ENCODE measurements at regions of chr12 and their contacts with region 1.

Region 1: GRCh38 chr12:6965026-6965661 is 5.3 kb downstream of the PHB2 start:
- DNase-seq: peak; percentile 89 to 92 (median 90)
- ATAC-seq: peak; percentile 68 to 79 (median 72)
- H3K4me3 ChIP-seq: no peak overlapping the region
- H3K27ac ChIP-seq: peak overlapping the region; percentile 18 to 81 (median 66)
- H3K4me1 ChIP-seq: peaks cover 6 to 56% (median 43%) of the 10 kb centered on the region in 12 donors
- H3K27me3 ChIP-seq: no peaks in the 10 kb centered on the region
- CTCF ChIP-seq: peak; percentile 87 to 96 (median 92)
- POLR2A ChIP-seq: no peak

Region 2: GRCh38 chr12:6867413-6868210 is 97.5 kb before region 1 on chr12 and contains the start of gene TPI1:
- intact Hi-C with region 1: loop called in 4 of 10 experiments (anchors 2 to 10 kb)
- DNase-seq: peak; percentile 89 to 93 (median 90)
- ATAC-seq: peak; percentile 66 to 87 (median 82)
- H3K4me3 ChIP-seq: peak within 1 kb of the TSS; percentile 77 to 100 (median 98)
- H3K27ac ChIP-seq: peak within 1 kb of the TSS; percentile 96 to 100 (median 99)
- H3K4me1 ChIP-seq: peaks cover 15 to 47% (median 43%) of the 10 kb centered on the region in 12 donors
- H3K27me3 ChIP-seq: no peaks in the 10 kb centered on the region
- CTCF ChIP-seq: peak in 2 of 12 donors; percentile 15 to 23
- POLR2A ChIP-seq: peak; percentile 80 to 99
- total RNA-seq, gene TPI1: 600 to 1,024 (median 730) TPM

Region 3: GRCh38 chr12:6927379-6928024 is 37.6 kb before region 1 on chr12 and contains the start of gene ATN1:
- intact Hi-C with region 1: loop called in 2 of 10 experiments (anchors 1 to 2 kb)
- DNase-seq: peak; percentile 89 to 91 (median 90)
- ATAC-seq: peak; percentile 23 to 65 (median 60)
- H3K4me3 ChIP-seq: peak within 1 kb of the TSS; percentile 67 to 98 (median 83)
- H3K27ac ChIP-seq: peak within 1 kb of the TSS; percentile 87 to 98 (median 96)
- H3K4me1 ChIP-seq: peaks cover 12 to 79% (median 58%) of the 10 kb centered on the region in 12 donors
- H3K27me3 ChIP-seq: no peaks in the 10 kb centered on the region
- CTCF ChIP-seq: no peak
- POLR2A ChIP-seq: peak in 1 of 2 donors; percentile 38
- total RNA-seq, gene ATN1: 38.4 to 82.9 (median 67.2) TPM

Region 4: DNA sequence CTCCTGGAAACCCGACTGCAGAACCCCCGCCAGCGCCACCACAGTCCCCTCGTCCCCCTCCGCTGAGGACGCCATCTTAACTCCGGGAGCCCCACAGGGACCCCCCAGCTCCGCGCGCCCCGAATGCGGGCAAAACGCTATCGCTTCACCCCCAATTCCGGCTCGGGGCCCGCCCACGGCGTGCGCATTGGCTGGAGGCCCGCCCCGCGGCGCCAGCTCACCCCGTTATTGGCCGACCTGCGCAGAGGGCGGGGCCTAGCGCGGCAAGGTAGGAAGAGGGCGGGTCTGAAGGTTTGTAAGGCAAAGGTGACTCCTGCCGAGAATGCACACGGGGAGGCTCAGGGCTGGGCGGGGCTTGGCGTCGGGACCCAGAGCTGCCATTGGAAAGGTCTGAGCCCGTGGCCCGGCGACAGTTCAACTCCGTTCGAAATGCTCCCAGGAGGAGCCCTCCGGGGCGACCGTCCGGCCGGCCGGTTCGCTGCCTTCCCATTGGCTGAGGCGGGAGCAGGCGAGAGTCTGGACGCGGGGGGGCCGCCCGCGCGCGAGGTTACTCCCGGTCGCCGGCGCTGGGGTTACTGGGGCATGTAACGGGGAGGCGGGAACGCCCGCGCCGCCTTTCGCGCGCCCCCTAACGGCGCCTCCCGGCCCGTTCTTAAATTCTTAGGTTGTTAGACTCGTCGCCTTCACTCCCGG is 53.4 kb after region 1 on chr12 and contains the start of gene LPCAT3:
- intact Hi-C with region 1: loop called in 4 of 10 experiments (anchors 2 to 5 kb)
- DNase-seq: peak; percentile 97 to 99 (median 98)
- ATAC-seq: peak; percentile 96 to 97 (median 96)
- H3K4me3 ChIP-seq: peak within 1 kb of the TSS; percentile 53 to 96 (median 78)
- H3K27ac ChIP-seq: peak within 1 kb of the TSS; percentile 48 to 96 (median 94)
- H3K4me1 ChIP-seq: peaks cover 0 to 38% (median 19%) of the 10 kb centered on the region in 12 donors
- H3K27me3 ChIP-seq: no peaks in the 10 kb centered on the region
- CTCF ChIP-seq: peak; percentile 84 to 96 (median 91)
- POLR2A ChIP-seq: peak in 1 of 2 donors; percentile 76
- total RNA-seq, gene LPCAT3: 19.9 to 66.3 (median 46.8) TPM

Region 5: DNA sequence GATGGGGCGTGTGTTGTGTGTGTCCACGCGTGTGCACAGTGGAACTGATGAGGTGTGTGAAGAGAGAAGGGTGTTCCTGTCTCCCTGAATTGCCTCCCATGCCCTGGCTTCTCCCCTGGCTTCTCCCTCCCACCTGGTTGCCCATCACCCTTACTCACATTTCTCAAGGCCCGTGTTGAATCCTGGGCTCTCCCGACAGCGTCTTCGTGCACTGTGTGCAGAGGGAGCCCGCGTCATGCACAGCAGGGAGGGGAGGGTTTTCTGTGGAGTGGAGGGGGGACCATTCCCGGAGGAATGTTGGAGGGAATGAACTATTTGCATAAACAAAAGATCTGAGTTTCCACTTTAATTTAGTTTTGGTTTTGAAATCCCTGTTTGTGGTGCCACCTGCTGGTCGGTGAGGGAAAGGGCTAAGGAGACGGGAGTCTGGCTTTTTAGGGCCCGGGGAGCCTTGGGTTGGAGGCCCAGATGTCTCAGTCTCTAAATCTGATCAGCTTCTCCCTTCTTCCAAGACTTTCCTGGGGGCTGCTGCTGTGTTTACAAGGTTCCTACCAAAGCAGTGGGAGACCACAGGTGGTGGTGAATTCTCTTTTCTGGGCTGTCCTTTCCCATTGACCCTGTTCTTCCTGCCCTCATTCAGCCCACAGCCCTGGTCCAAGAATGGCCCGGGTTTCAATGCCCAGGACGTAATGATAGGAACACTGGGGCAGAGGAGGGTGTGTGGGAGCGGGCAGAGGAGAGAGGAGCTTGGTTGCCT is 127.3 kb after region 1 on chr12 and contains the start of gene C1R:
- intact Hi-C with region 1: loop called in 2 of 10 experiments (anchors 5 to 10 kb)
- DNase-seq: peak; percentile 66 to 85 (median 74)
- ATAC-seq: peak; percentile 78 to 80 (median 80)
- H3K4me3 ChIP-seq: peak within 1 kb of the TSS; percentile 1 to 69 (median 55)
- H3K27ac ChIP-seq: peak within 1 kb of the TSS; percentile 41 to 86 (median 72)
- H3K4me1 ChIP-seq: peaks cover 0 to 29% (median 7%) of the 10 kb centered on the region in 12 donors
- H3K27me3 ChIP-seq: no peaks in the 10 kb centered on the region
- CTCF ChIP-seq: peak; percentile 81 to 94 (median 89)
- POLR2A ChIP-seq: no peak
- total RNA-seq, gene C1R: 42.6 to 343 (median 107) TPM

Region 6: DNA sequence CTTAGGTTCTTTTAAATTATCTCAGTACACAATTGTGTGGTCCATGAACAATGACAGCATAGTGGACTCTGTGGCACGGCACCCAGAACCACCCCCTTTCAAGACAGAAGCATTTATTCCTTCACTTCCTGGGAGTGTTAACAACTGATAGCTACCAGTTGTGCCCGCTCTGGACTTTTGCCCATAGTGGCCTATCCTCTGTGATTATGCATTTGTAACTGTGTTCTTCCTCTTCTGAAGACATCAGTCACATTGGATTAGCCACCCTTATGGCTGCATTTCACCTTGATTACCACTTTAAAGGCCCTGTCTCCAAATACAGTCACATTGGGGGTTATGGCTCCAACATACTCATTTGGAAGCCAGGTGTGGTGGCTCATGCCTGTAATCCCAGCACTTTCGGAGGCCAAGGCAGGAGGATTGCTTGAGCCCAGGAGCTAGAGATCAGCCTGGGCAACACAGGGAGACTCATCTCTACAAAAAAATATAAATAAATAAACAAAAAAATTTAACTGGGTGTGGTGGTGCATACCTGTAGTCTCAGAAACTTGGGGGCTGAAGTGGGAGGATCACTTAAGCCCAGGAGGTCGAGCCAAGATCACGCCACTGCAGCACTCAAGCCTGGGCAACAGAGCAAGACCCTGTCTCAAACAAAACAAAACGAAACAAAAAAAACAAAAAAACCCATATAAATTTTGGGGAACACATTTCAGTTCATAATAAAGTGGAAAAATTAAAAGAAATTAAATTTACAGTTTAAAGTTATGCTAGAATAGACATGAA is 1921.5 kb after region 1 on chr12:
- intact Hi-C with region 1: no loop called
- DNase-seq: no peak
- ATAC-seq: no peak
- H3K4me3 ChIP-seq: no peak overlapping the region
- H3K27ac ChIP-seq: no peak overlapping the region
- H3K4me1 ChIP-seq: peaks cover 0 to 5% (median 0%) of the 10 kb centered on the region in 12 donors
- H3K27me3 ChIP-seq: no peaks in the 10 kb centered on the region
- CTCF ChIP-seq: no peak
- POLR2A ChIP-seq: no peak